ENCODE measurements at regions of chr14 and their contacts with region 1.

Region 1: GRCh38 chr14:101767618-101768362 is 6.3 kb downstream of the PPP2R5C start:
- DNase-seq: no peak
- ATAC-seq: no peak
- H3K4me3 Mint-ChIP-seq: no peak overlapping the region
- H3K27ac Mint-ChIP-seq: no peak overlapping the region
- H3K4me1 Mint-ChIP-seq: peaks cover 2% of the 10 kb centered on the region
- H3K27me3 Mint-ChIP-seq: no peaks in the 10 kb centered on the region

Region 2: DNA sequence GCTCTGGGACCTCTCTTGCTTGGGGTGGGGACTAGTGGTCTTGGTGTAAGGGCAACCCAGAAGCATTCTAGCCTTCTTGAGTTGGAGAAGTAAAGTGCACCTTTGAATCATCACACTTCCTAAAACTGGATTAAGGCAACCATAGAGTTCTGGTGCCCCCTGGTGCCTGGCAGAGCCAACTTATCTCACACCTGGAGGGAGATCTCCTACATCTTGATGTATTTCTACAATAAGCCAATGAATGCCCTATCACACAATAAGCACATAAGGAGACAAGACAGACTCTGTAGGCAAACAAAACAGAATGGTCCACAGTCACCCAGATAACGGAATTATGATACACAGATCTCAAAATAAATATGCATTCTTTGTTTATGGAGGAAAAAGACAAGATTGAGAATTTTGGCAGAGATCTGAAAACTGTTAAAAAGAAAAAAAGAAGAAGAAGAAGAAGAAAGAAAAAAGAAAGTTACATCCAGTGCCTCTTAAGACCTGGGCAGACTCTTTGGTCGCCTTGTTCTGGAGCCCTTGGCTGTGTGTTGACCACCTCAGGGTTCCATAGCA is 102.2 kb before region 1 on chr14:
- CTCF ChIA-PET with region 1: no interaction called
- POLR2A ChIA-PET with region 1: no interaction called
- DNase-seq: peak; percentile 50
- ATAC-seq: peak; percentile 44
- H3K4me3 Mint-ChIP-seq: no peak overlapping the region
- H3K27ac Mint-ChIP-seq: no peak overlapping the region
- H3K4me1 Mint-ChIP-seq: no peaks in the 10 kb centered on the region
- H3K27me3 Mint-ChIP-seq: peaks cover 41% of the 10 kb centered on the region

Region 3: GRCh38 chr14:101707068-101707842 is 60.5 kb before region 1 on chr14:
- CTCF ChIA-PET with region 1: interaction called, 55 read pairs
- POLR2A ChIA-PET with region 1: interaction called, 5 read pairs
- DNase-seq: peak; percentile 81
- ATAC-seq: peak; percentile 66
- H3K4me3 Mint-ChIP-seq: peak overlapping the region; percentile 3
- H3K27ac Mint-ChIP-seq: peak overlapping the region; percentile 73
- H3K4me1 Mint-ChIP-seq: peaks cover 33% of the 10 kb centered on the region
- H3K27me3 Mint-ChIP-seq: peaks cover 19% of the 10 kb centered on the region

Region 4: GRCh38 chr14:101809671-101810514 is 42.1 kb after region 1 on chr14:
- CTCF ChIA-PET with region 1: interaction called, 49 read pairs
- POLR2A ChIA-PET with region 1: interaction called, 16 read pairs
- DNase-seq: peak; percentile 93
- ATAC-seq: peak; percentile 87
- H3K4me3 Mint-ChIP-seq: peak overlapping the region; percentile 96
- H3K27ac Mint-ChIP-seq: peak overlapping the region; percentile 100
- H3K4me1 Mint-ChIP-seq: peaks cover 45% of the 10 kb centered on the region
- H3K27me3 Mint-ChIP-seq: no peaks in the 10 kb centered on the region

Region 5: DNA sequence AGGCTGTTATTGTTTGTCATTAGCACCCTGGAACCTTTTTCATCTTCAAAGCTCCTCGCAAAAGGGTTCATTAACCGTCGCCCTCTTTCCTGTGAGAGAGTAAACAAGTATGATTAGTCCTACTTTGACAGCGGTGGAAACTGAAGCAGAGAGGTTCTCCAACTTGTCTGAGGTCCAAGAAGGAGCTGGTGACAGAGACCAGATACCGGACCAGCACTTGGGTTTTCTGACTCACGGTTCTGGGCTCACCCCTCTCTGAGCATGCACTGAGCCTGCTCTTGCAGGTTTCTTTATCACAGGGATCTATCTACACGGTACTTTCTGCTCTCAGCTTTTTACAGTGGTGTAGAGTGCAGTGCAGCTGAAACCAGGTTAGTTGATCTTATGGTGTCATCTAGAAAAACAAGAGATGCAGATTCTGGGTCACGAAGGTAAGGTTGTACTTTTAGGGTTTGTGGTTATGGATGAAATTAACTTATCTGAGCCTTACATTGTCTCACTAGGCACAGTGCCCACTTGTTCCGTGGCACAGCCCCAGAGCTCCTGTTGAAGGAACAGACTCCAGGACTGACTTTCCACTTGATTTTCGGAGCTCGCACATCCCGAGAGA is 55.8 kb after region 1 on chr14:
- CTCF ChIA-PET with region 1: interaction called, 54 read pairs
- POLR2A ChIA-PET with region 1: interaction called, 29 read pairs
- DNase-seq: peak; percentile 72
- ATAC-seq: peak; percentile 62
- H3K4me3 Mint-ChIP-seq: peak overlapping the region; percentile 69
- H3K27ac Mint-ChIP-seq: peak overlapping the region; percentile 96
- H3K4me1 Mint-ChIP-seq: peaks cover 84% of the 10 kb centered on the region
- H3K27me3 Mint-ChIP-seq: no peaks in the 10 kb centered on the region

Region 6: GRCh38 chr14:101849125-101849524 is 81.3 kb after region 1 on chr14:
- CTCF ChIA-PET with region 1: interaction called, 37 read pairs
- POLR2A ChIA-PET with region 1: interaction called, 6 read pairs
- DNase-seq: no peak
- ATAC-seq: no peak
- H3K4me3 Mint-ChIP-seq: no peak overlapping the region
- H3K27ac Mint-ChIP-seq: no peak overlapping the region
- H3K4me1 Mint-ChIP-seq: peaks cover 66% of the 10 kb centered on the region
- H3K27me3 Mint-ChIP-seq: no peaks in the 10 kb centered on the region

Region 7: DNA sequence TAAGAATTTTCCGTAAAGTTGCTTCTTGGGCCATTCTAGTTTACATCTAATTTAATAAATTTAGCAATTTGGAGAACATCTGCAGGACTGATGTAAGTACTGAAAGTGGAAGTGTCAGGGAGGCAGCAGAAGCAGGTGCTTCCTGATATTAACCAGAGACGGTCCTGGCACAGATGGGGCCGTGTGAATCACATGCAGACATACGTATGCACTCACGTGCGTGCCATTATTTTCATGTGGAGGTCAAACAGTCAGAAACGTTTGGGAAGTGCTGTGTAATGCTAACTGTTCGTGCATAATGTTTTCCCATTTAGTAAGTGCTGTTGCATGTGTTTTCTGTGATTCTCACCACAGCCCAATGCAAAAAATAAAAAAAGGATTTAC is 108.8 kb after region 1 on chr14:
- CTCF ChIA-PET with region 1: interaction called, 10 read pairs
- POLR2A ChIA-PET with region 1: interaction called, 4 read pairs
- DNase-seq: peak; percentile 76
- ATAC-seq: peak; percentile 96
- H3K4me3 Mint-ChIP-seq: peak overlapping the region; percentile 56
- H3K27ac Mint-ChIP-seq: peak overlapping the region; percentile 51
- H3K4me1 Mint-ChIP-seq: peaks cover 55% of the 10 kb centered on the region
- H3K27me3 Mint-ChIP-seq: no peaks in the 10 kb centered on the region

Region 8: GRCh38 chr14:101964297-101965144 is 196.7 kb after region 1 on chr14 and contains the start of gene DYNC1H1:
- CTCF ChIA-PET with region 1: interaction called, 13 read pairs
- POLR2A ChIA-PET with region 1: no interaction called
- DNase-seq: peak; percentile 90
- ATAC-seq: peak; percentile 86
- H3K4me3 Mint-ChIP-seq: peak within 1 kb of the TSS; percentile 94
- H3K27ac Mint-ChIP-seq: peak within 1 kb of the TSS; percentile 94
- H3K4me1 Mint-ChIP-seq: peaks cover 44% of the 10 kb centered on the region
- H3K27me3 Mint-ChIP-seq: peaks cover 3% of the 10 kb centered on the region
- total RNA-seq, gene DYNC1H1: 271 to 274 TPM